ENCODE measurements at regions of chr17 and their contacts with region 1.

Region 1: GRCh38 chr17:82098072-82098821 is at the start of gene FASN:
- DNase-seq: peak; percentile 88 to 94 (median 91)
- H3K4me3 ChIP-seq: peak within 1 kb of the TSS; percentile 23 to 66
- H3K4me3 Mint-ChIP-seq: peak within 1 kb of the TSS; percentile 35 to 82 (median 68)
- H3K27ac ChIP-seq: peak within 1 kb of the TSS; percentile 78
- H3K27ac Mint-ChIP-seq: peak within 1 kb of the TSS in 4 of 7 donors; percentile 22 to 86 (median 26)
- H3K4me1 ChIP-seq: peaks cover 20% of the 10 kb centered on the region
- H3K4me1 Mint-ChIP-seq: peaks cover 0 to 20% (median 2%) of the 10 kb centered on the region in 4 donors
- H3K27me3 ChIP-seq: no peaks in the 10 kb centered on the region
- H3K27me3 Mint-ChIP-seq: no peaks in the 10 kb centered on the region
- total RNA-seq, gene FASN: 26.5 to 27.7 TPM

Region 2: GRCh38 chr17:81683584-81684237 is 414.5 kb before region 1 on chr17 and contains the starts of genes ARL16 and HGS:
- CTCF ChIA-PET with region 1: no interaction called
- POLR2A ChIA-PET with region 1: no interaction called
- intact Hi-C with region 1: loop called (anchors 5 kb)
- DNase-seq: peak; percentile 97 to 98 (median 98)
- H3K4me3 ChIP-seq: peak within 1 kb of the TSS; percentile 80 to 93
- H3K4me3 Mint-ChIP-seq: peak within 1 kb of the TSS; percentile 94 to 99 (median 97)
- H3K27ac ChIP-seq: peak within 1 kb of the TSS; percentile 83
- H3K27ac Mint-ChIP-seq: peak within 1 kb of the TSS; percentile 84 to 99 (median 96)
- H3K4me1 ChIP-seq: peaks cover 31% of the 10 kb centered on the region
- H3K4me1 Mint-ChIP-seq: peaks cover 20 to 54% (median 27%) of the 10 kb centered on the region in 4 donors
- H3K27me3 ChIP-seq: no peaks in the 10 kb centered on the region
- H3K27me3 Mint-ChIP-seq: no peaks in the 10 kb centered on the region
- total RNA-seq, gene ARL16: 25.9 to 27.7 TPM
- total RNA-seq, gene HGS: 182 to 206 TPM

Region 3: GRCh38 chr17:82037113-82037888 is 60.9 kb before region 1 on chr17 and contains the start of gene DCXR:
- CTCF ChIA-PET with region 1: no interaction called
- POLR2A ChIA-PET with region 1: interaction called, 11 read pairs
- intact Hi-C with region 1: loop called (anchors 1 kb)
- DNase-seq: peak; percentile 95 to 96 (median 95)
- H3K4me3 ChIP-seq: peak within 1 kb of the TSS; percentile 52 to 80
- H3K4me3 Mint-ChIP-seq: peak within 1 kb of the TSS; percentile 87 to 95 (median 90)
- H3K27ac ChIP-seq: peak within 1 kb of the TSS; percentile 57
- H3K27ac Mint-ChIP-seq: peak within 1 kb of the TSS; percentile 87 to 96 (median 93)
- H3K4me1 ChIP-seq: peaks cover 19% of the 10 kb centered on the region
- H3K4me1 Mint-ChIP-seq: peaks cover 13 to 36% (median 18%) of the 10 kb centered on the region in 4 donors
- H3K27me3 ChIP-seq: no peaks in the 10 kb centered on the region
- H3K27me3 Mint-ChIP-seq: no peaks in the 10 kb centered on the region
- total RNA-seq, gene DCXR: 65.9 to 68.2 TPM

Region 4: DNA sequence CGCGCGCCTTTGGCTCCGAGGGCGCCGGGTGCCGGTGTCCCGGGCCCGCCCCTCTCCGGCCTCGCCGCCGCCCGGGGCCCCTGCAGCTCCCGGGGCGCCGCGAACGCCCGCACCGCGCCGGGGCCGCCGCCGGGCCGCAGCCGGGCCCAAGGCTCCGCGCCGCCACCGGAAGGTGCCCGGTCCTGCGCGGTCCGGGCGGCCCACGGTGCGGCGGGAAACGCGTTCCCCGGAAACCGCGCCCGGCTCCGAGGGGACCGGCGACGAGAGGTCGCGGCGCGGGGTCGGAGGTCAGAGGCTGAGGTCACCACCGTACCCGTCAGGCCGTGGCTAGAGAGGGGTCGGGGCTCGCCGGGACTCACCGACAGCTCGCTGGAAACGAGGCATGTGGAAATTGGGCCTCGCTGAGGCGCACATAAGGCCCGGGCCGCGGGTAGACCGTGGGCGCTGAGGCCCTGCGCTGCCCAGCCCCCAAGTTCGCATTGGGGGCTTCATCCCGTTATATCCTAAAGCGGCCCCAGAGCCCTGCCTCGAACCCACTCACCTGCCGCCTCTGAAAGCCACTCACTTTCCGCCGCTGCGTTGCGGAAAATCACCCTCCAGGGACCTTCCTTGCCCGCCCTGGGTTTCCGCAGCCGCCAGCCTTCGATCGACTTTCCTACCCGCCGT is 32.5 kb before region 1 on chr17 and contains the start of gene DUS1L:
- CTCF ChIA-PET with region 1: no interaction called
- POLR2A ChIA-PET with region 1: interaction called, 15 read pairs
- intact Hi-C with region 1: no loop called
- DNase-seq: peak; percentile 44 to 78 (median 70)
- H3K4me3 ChIP-seq: peak within 1 kb of the TSS; percentile 42 to 73
- H3K4me3 Mint-ChIP-seq: peak within 1 kb of the TSS; percentile 81 to 89 (median 86)
- H3K27ac ChIP-seq: peak within 1 kb of the TSS; percentile 66
- H3K27ac Mint-ChIP-seq: peak within 1 kb of the TSS; percentile 91 to 97 (median 94)
- H3K4me1 ChIP-seq: peaks cover 28% of the 10 kb centered on the region
- H3K4me1 Mint-ChIP-seq: peaks cover 0 to 23% (median 12%) of the 10 kb centered on the region in 4 donors
- H3K27me3 ChIP-seq: no peaks in the 10 kb centered on the region
- H3K27me3 Mint-ChIP-seq: no peaks in the 10 kb centered on the region
- total RNA-seq, gene DUS1L: 139 to 141 TPM

Region 5: GRCh38 chr17:82153745-82154375 is 55.6 kb after region 1 on chr17:
- CTCF ChIA-PET with region 1: no interaction called
- POLR2A ChIA-PET with region 1: interaction called, 5 read pairs
- intact Hi-C with region 1: loop called (anchors 2 kb)
- DNase-seq: peak; percentile 76 to 86 (median 81)
- H3K4me3 ChIP-seq: no peak overlapping the region
- H3K4me3 Mint-ChIP-seq: no peak overlapping the region
- H3K27ac ChIP-seq: no peak overlapping the region
- H3K27ac Mint-ChIP-seq: peak overlapping the region in 6 of 7 donors; percentile 74 to 93 (median 89)
- H3K4me1 ChIP-seq: peaks cover 9% of the 10 kb centered on the region
- H3K4me1 Mint-ChIP-seq: peaks cover 5 to 7% (median 6%) of the 10 kb centered on the region in 4 donors
- H3K27me3 ChIP-seq: no peaks in the 10 kb centered on the region
- H3K27me3 Mint-ChIP-seq: no peaks in the 10 kb centered on the region

Region 6: DNA sequence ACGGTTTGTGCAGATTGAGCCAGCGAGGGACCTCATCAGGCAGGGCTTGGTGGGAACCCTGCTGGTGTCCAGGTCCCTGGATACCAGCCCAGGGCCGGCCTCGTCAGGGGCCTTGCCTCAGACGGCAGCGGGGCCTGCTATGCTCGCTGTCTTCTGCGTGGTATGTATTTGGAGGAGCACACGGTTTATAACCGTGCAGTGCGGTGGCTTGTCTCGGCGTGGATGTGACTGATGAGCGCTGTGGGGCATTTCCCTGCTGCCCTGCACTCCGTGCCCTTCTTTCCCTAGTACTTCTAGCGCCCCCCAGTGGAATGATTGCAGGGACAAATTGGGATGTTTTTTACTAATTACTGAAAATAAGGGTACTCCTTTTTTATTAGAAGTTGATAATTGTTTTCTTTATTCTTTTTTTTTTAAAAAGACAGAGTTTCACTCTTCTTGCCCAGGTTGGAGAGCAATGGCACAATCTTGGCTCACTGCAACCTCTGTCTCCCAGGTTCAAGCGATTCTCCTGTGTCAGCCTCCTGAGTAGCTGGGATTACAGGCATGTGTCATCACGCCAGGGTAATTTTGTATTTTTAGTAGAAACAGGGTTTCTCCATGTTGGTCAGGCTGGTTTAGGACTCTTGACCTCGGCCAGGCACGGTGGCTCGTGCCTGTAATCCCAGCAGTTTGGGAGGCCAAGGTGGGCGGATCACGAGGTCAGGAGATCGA is 669.0 kb after region 1 on chr17:
- CTCF ChIA-PET with region 1: no interaction called
- POLR2A ChIA-PET with region 1: no interaction called
- intact Hi-C with region 1: no loop called
- DNase-seq: peak in 4 of 5 donors; percentile 16 to 26 (median 17)
- H3K4me3 ChIP-seq: no peak overlapping the region
- H3K4me3 Mint-ChIP-seq: no peak overlapping the region
- H3K27ac ChIP-seq: no peak overlapping the region
- H3K27ac Mint-ChIP-seq: no peak overlapping the region
- H3K4me1 ChIP-seq: no peaks in the 10 kb centered on the region
- H3K4me1 Mint-ChIP-seq: peaks cover 0 to 13% (median 10%) of the 10 kb centered on the region in 4 donors
- H3K27me3 ChIP-seq: no peaks in the 10 kb centered on the region
- H3K27me3 Mint-ChIP-seq: no peaks in the 10 kb centered on the region

Measured in CD4-positive, alpha-beta memory T cell (primary cell).